KBM-7 (cell line): ENCODE measurements at regions of chr1 and their contacts with region 1.

Region 1: GRCh38 chr1:203273206-203273868 is 32.0 kb upstream of the BTG2 start:
- DNase-seq: peak; percentile 76

Region 2: DNA sequence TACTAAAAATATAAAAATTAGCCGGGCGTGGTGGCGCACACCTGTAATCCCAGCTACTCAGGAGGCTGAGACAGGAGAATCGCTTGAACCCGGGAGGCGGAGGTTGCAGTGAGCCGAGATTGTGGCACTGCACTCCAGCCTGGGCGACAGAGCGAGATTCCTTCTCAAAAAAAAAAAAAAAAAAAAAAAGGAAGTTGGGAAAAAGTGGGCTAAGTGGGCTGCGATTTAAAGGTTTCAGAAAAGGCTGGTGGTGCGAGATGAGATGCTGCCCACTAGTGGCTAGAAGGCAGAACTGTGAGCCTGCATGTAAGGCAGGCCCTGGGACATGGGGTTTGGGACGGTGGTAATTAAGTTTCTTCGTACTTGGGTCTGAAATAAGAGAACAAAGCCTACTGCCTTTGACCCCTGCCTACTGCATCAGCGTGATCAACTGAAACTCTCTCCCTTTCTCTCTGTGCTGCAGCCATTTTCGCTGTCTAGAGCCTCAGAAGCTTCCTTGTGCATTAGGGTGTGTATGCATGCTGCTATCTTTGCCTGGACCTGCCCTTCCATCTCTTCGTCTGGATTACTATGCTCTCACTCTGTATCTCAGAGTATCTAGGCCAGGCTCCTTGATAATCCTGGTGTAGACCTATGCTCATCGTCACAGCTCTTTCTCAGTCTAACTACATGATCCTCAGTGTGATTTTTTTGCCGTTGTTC is 65.1 kb after region 1 on chr1:
- in situ Hi-C with region 1: loop called (anchors 5 kb)
- DNase-seq: peak; percentile 86

Region 3: GRCh38 chr1:203480525-203481084 is 207.3 kb after region 1 on chr1:
- in situ Hi-C with region 1: loop called (anchors 10 kb)
- DNase-seq: no peak